ENCODE measurements at regions of chr17 and their contacts with region 1.

Region 1: DNA sequence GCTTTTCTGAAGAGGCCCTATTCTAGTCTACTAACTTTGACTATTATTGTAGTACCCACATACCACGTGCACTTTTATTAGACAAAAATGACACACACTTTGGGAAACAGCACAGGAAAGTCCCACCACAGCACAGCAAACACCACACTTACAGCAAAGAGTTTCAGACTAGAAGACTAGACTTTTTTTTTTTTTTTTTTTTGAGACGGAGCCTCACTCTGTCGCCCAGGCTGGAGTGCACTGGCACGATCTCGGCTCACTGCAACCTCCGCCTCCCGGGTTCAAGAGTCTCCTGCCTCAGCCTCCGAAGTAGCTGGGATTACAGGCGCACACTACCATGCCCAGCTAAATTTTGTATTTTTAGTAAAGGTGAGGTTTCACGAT is 20.1 kb downstream of the YWHAE start:
- DNase-seq: no peak
- ATAC-seq: no peak
- H3K4me3 ChIP-seq: no peak overlapping the region
- H3K27ac ChIP-seq: peak overlapping the region; percentile 48 to 98 (median 59)
- H3K4me1 ChIP-seq: peaks cover 84 to 85% of the 10 kb centered on the region in 2 donors
- H3K27me3 ChIP-seq: no peaks in the 10 kb centered on the region
- CTCF ChIP-seq: no peak
- POLR2A ChIP-seq: no peak

Region 2: GRCh38 chr17:1122533-1123392 is 257.2 kb before region 1 on chr17:
- in situ Hi-C with region 1: no loop called
- intact Hi-C with region 1: no loop called
- DNase-seq: peak; percentile 68 to 69
- ATAC-seq: peak; percentile 83 to 84
- H3K4me3 ChIP-seq: no peak overlapping the region
- H3K27ac ChIP-seq: peak overlapping the region; percentile 27 to 71 (median 62)
- H3K4me1 ChIP-seq: peaks cover 7 to 11% of the 10 kb centered on the region in 2 donors
- H3K27me3 ChIP-seq: peaks cover 0 to 9% (median 0%) of the 10 kb centered on the region in 3 donors
- CTCF ChIP-seq: peak; percentile 88 to 94 (median 92)
- POLR2A ChIP-seq: no peak

Region 3: DNA sequence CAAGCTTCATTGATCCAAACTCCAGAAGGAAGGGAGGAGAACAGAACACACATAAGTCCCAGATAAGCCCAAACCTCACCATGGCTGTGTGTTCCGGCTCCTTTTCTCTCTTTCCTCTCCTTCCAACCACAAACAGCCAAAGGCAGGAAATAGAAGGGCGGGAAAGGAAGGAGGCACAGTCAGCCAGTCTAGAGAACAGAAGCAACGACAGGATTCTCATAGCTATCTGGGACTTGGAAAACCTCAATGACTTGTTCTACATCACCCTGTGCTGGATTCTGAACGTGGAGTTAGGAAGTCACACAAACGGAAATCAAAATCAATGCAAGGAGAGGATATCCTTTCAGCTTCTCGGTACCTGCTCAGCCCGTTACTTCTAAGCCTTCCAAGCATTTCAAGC is 67.1 kb after region 1 on chr17:
- in situ Hi-C with region 1: no loop called
- intact Hi-C with region 1: loop called (anchors 5 kb)
- DNase-seq: no peak
- ATAC-seq: no peak
- H3K4me3 ChIP-seq: no peak overlapping the region
- H3K27ac ChIP-seq: peak overlapping the region; percentile 57 to 75 (median 67)
- H3K4me1 ChIP-seq: peaks cover 42 to 43% of the 10 kb centered on the region in 2 donors
- H3K27me3 ChIP-seq: no peaks in the 10 kb centered on the region
- CTCF ChIP-seq: no peak
- POLR2A ChIP-seq: no peak

Region 4: DNA sequence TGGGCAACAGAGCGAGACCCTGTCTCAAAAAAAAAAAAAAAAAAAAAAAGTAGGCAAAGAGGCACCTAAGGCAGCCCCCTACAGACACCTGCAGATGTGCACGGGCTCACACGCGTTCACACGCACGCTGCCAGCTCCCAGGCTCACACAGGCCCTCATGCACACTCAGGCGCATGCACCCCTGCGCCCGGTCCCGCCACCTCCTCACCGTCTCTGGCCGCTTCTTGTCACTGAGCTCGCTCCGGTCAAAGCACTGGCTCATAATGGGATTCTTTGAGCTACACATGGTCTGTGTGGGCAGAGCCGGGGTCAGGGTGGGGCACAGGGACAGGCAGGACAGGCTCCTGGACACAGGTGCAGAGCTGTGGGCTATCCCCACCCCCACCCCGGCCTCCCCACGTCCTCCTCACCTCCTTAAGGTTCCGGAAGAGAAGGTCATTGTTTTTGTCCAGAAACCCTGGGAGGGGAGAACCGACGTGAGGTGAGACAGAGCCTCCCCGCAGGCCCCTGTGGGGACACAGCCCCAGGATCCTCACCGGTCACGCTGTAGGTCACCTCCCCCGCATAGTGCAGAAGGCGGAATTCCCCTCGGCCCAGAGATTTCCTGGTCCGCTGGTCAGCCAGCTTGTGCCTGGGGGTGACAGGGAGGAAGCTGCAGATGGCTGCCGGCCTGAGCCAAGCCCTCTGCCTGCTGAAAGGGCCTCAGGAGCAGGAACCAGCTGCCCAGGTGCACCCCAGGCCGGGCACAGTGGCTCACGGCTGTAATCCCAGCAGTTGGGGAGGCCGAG is 94.7 kb after region 1 on chr17:
- in situ Hi-C with region 1: no loop called
- intact Hi-C with region 1: no loop called
- DNase-seq: no peak
- ATAC-seq: no peak
- H3K4me3 ChIP-seq: no peak overlapping the region
- H3K27ac ChIP-seq: peak overlapping the region in 1 of 4 donors; percentile 31
- H3K4me1 ChIP-seq: peaks cover 3 to 6% of the 10 kb centered on the region in 2 donors
- H3K27me3 ChIP-seq: no peaks in the 10 kb centered on the region
- CTCF ChIP-seq: no peak
- POLR2A ChIP-seq: no peak

Measured in gastrocnemius medialis (tissue), 4 donors.